A549 (cell line): ENCODE measurements at regions of chr1 and their contacts with region 1.

Region 1: GRCh38 chr1:211680752-211681327 is 5.4 kb upstream of the NEK2 start:
- DNase-seq: peak; percentile 89 to 91
- ATAC-seq: peak; percentile 84 to 88
- H3K4me3 ChIP-seq: no peak overlapping the region
- H3K27ac ChIP-seq: peak overlapping the region; percentile 50 to 71; a peak in 5 of 6 replicates
- H3K4me1 ChIP-seq: peaks cover 9% of the 10 kb centered on the region
- CTCF ChIP-seq: peak; percentile 95
- EP300 ChIP-seq: no peak
- POLR2A ChIP-seq: no peak
- RAD21 ChIP-seq: peak; percentile 96 to 97

Region 2: DNA sequence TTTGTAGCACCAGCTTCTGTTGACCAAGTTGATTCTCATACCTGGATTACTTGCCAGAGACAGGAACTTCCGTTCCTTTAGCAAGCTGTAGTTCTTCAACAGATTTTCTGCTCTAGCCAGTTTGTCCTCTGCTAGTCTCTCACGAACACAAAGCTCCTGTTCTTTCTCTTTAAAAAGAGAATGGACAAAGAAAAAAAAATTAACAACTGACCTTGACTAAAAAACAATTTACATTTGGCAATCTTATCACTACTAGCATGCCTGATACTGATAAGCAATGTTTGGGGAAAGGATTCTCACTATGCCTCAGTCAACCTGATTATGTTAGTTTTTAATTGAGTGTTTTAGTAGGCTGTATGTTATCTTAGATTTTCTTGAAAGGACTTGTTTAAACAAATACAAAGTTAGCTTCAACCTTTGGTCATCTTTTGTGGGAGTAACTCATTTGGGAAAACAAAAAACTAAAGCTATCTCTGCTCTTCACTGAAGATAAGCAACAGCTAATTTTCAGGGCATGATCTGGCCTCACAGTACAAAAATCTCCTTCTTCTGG is 13.7 kb before region 1 on chr1:
- CTCF ChIA-PET with region 1: interaction called, 26 read pairs
- POLR2A ChIA-PET with region 1: no interaction called
- DNase-seq: no peak
- ATAC-seq: no peak
- H3K4me3 ChIP-seq: no peak overlapping the region
- H3K27ac ChIP-seq: no peak overlapping the region
- H3K4me1 ChIP-seq: no peaks in the 10 kb centered on the region
- CTCF ChIP-seq: no peak
- EP300 ChIP-seq: no peak
- POLR2A ChIP-seq: no peak
- RAD21 ChIP-seq: no peak

Region 3: DNA sequence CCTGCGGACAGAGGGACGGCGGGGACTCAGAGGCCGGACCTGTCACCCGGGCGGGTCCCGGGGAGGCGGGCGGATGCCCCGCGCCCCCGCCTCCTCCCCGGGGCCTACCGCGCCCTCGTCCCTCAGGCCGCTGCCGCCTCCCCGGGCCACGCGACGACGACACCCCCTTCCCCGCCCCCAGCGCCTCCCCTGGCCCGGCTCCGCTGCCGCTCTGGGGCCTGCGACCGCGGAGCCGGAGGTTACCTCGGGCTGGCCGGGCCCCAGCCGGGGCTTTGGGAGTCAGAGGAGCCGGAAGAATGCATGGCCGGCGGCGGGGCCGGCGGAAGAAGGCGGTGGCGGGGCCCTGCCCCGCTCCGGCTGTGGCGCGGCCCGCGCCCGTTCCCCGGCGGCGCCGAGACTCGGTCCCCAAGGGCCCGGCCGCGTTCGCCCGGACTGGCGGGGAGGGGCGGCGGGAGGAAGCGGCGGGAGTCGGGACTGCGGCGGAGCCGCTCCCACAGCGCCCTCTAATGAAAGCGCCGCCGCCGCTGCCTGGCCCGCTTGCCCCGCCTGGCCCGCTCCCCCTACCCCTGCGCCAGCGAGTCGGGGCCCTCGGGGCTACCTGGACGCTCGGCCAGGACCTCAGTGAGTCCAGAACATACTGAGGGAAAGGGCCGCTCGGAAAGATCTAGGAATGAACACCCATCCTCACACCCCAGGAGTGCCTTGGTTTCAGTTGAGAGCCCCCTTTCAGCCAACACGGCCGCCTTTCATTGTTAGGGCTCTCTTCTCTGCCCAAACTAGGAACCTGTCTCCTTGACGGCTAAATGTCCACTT is 149.7 kb after region 1 on chr1 and contains the start of gene LPGAT1:
- CTCF ChIA-PET with region 1: interaction called, 15 read pairs
- POLR2A ChIA-PET with region 1: no interaction called
- DNase-seq: peak; percentile 76 to 77
- ATAC-seq: peak; percentile 89 to 95
- H3K4me3 ChIP-seq: peak within 1 kb of the TSS; percentile 69
- H3K27ac ChIP-seq: peak within 1 kb of the TSS; percentile 97 to 99
- H3K4me1 ChIP-seq: peaks cover 42% of the 10 kb centered on the region
- CTCF ChIP-seq: peak; percentile 83
- EP300 ChIP-seq: no peak
- POLR2A ChIP-seq: no peak; the same call in 1 of the 2 replicates
- RAD21 ChIP-seq: peak; percentile 46 to 88; a peak in 4 of 5 replicates
- polyA plus RNA-seq, gene LPGAT1: 48.0 and 48.5 TPM in 2 replicates

Region 4: GRCh38 chr1:211944733-211945500 is 264.1 kb after region 1 on chr1:
- CTCF ChIA-PET with region 1: interaction called, 19 read pairs
- POLR2A ChIA-PET with region 1: no interaction called
- DNase-seq: peak; percentile 93 to 96
- ATAC-seq: peak; percentile 99 to 100
- H3K4me3 ChIP-seq: 0 out of 3 replicates have a peak overlapping the region, but pooled peaks have one; percentile 2
- H3K27ac ChIP-seq: peak overlapping the region; percentile 79 to 84
- H3K4me1 ChIP-seq: peaks cover 30% of the 10 kb centered on the region
- CTCF ChIP-seq: peak; percentile 95
- EP300 ChIP-seq: peak; percentile 10 to 52; a peak in 2 of 5 replicates
- POLR2A ChIP-seq: no peak
- RAD21 ChIP-seq: peak; percentile 95 to 97

Region 5: GRCh38 chr1:212012034-212012740 is 331.3 kb after region 1 on chr1:
- CTCF ChIA-PET with region 1: interaction called, 14 read pairs
- POLR2A ChIA-PET with region 1: no interaction called
- DNase-seq: peak; percentile 75 to 76
- ATAC-seq: peak; percentile 98
- H3K4me3 ChIP-seq: no peak overlapping the region
- H3K27ac ChIP-seq: 0 out of 6 replicates have a peak overlapping the region, but pooled peaks of 1 of the 2 experiments have one; percentile 37
- H3K4me1 ChIP-seq: peaks cover 13% of the 10 kb centered on the region
- CTCF ChIP-seq: peak; percentile 94
- EP300 ChIP-seq: no peak
- POLR2A ChIP-seq: no peak
- RAD21 ChIP-seq: peak; percentile 88 to 91

Region 6: GRCh38 chr1:212062832-212063438 is 382.1 kb after region 1 on chr1:
- CTCF ChIA-PET with region 1: interaction called, 10 read pairs
- POLR2A ChIA-PET with region 1: no interaction called
- DNase-seq: peak; percentile 41 to 55
- ATAC-seq: peak; percentile 73 to 89
- H3K4me3 ChIP-seq: no peak overlapping the region
- H3K27ac ChIP-seq: no peak overlapping the region
- H3K4me1 ChIP-seq: no peaks in the 10 kb centered on the region
- CTCF ChIP-seq: peak; percentile 80
- EP300 ChIP-seq: no peak
- POLR2A ChIP-seq: no peak
- RAD21 ChIP-seq: peak; percentile 46 to 60